ENCODE measurements at regions of chr14 and their contacts with region 1.

Region 1: GRCh38 chr14:74867673-74868072 is 8.3 kb downstream of the PROX2 start:
- DNase-seq: peak; percentile 89
- ATAC-seq: peak; percentile 99
- H3K4me3 Mint-ChIP-seq: peak overlapping the region; percentile 22
- H3K27ac Mint-ChIP-seq: peak overlapping the region; percentile 74
- H3K4me1 Mint-ChIP-seq: peaks cover 25% of the 10 kb centered on the region
- H3K27me3 Mint-ChIP-seq: no peaks in the 10 kb centered on the region

Region 2: GRCh38 chr14:74514471-74514941 is 353.2 kb before region 1 on chr14:
- CTCF ChIA-PET with region 1: no interaction called
- DNase-seq: no peak
- ATAC-seq: peak; percentile 16
- H3K4me3 Mint-ChIP-seq: no peak overlapping the region
- H3K27ac Mint-ChIP-seq: no peak overlapping the region
- H3K4me1 Mint-ChIP-seq: peaks cover 11% of the 10 kb centered on the region
- H3K27me3 Mint-ChIP-seq: peaks cover 40% of the 10 kb centered on the region

Region 3: DNA sequence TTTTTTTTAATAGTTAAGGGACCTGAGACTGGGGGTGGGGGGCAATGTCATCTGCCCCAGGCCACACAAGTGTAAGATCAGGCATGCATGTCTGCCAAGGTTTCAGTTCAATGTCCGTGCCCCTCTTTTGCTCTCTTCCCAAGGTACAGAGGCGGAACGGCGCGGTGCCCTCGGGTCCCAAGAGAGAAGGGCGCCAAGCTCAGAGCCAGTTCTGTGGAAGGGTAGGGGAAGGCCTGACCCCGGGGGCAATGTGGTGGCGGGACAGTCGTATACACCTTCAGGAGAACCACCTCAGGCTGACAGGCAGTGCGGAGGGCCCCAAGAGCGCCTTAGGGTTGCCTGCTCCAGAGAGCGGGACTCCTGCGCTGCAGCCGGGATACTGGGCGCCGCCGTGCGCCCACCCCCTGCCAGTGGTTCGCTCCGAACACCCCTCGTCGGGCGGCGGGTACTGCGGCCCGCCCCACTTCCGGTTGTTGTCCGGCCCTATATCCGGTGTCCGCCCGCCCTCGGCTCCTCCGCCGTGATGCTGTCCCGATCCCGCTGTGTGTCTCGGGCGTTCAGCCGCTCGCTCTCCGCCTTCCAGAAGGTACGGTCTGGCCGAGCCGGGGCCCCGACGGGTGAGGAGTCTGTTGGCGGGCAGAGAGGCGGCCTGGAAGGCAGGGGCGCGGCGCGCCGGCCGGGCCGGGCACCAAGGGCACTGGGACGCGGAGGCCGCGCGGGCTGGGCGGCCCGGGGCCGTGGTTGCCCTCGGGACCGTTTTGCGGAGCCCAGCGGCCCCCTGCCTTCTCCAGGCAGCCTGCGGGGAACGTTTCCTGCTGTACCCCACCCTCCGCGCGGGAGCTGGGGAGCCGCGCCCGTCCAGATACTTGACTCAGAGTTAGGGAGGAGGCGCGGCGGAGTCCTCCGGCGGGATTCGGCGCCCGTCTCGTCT is 14.0 kb after region 1 on chr14 and contains the start of gene DLST:
- CTCF ChIA-PET with region 1: interaction called, 271 read pairs
- DNase-seq: peak; percentile 90
- ATAC-seq: peak; percentile 94
- H3K4me3 Mint-ChIP-seq: peak within 1 kb of the TSS; percentile 94
- H3K27ac Mint-ChIP-seq: peak within 1 kb of the TSS; percentile 92
- H3K4me1 Mint-ChIP-seq: peaks cover 59% of the 10 kb centered on the region
- H3K27me3 Mint-ChIP-seq: no peaks in the 10 kb centered on the region
- total RNA-seq, gene DLST: 106 to 119 TPM

Measured in activated CD8-positive, alpha-beta memory T cell treated with anti-CD3 and anti-CD28 coated beads, Interleukin-2, amount 10 ng/mL, durations not matched to agents 7 days and 5 days (primary cell).